B cell (primary cell): ENCODE measurements at regions of chr12 and their contacts with region 1.

Region 1: GRCh38 chr12:2244013-2244861 is 191.4 kb downstream of the CACNA1C start:
- DNase-seq: no peak
- ATAC-seq: no peak
- H3K4me3 ChIP-seq: no peak overlapping the region
- H3K4me3 Mint-ChIP-seq: no peak overlapping the region
- H3K27ac ChIP-seq: no peak overlapping the region
- H3K27ac Mint-ChIP-seq: no peak overlapping the region
- H3K4me1 ChIP-seq: peaks cover 13 to 20% of the 10 kb centered on the region in 2 donors
- H3K4me1 Mint-ChIP-seq: peaks cover 34% of the 10 kb centered on the region
- H3K27me3 ChIP-seq: no peaks in the 10 kb centered on the region
- H3K27me3 Mint-ChIP-seq: no peaks in the 10 kb centered on the region
- CTCF ChIP-seq: no peak

Region 2: DNA sequence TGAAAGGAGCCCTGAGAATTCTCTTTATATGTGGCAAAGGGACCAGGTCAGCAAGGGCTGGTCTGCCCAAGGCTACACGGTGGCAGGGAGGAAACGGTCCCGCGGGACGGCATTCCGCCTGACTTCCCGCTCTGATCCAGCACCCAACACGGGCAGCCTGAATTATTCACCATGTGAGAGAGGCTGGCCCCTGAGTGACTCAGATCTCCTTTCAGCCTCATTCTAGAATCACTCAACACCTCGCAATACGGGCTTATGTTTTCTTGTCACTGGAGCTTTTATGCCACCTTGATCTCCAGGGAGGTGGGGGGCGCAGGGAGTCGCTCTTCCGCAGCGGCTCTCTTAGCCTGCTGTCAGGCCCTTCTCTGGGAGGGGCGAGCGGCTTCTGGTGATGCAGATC is 415.4 kb before region 1 on chr12:
- CTCF ChIA-PET with region 1: no interaction called
- POLR2A ChIA-PET with region 1: no interaction called
- intact Hi-C with region 1: no loop called
- DNase-seq: no peak
- ATAC-seq: no peak
- H3K4me3 ChIP-seq: no peak overlapping the region
- H3K4me3 Mint-ChIP-seq: no peak overlapping the region
- H3K27ac ChIP-seq: no peak overlapping the region
- H3K27ac Mint-ChIP-seq: no peak overlapping the region
- H3K4me1 ChIP-seq: no peaks in the 10 kb centered on the region
- H3K4me1 Mint-ChIP-seq: peaks cover 3% of the 10 kb centered on the region
- H3K27me3 ChIP-seq: peaks cover 0 to 18% (median 3%) of the 10 kb centered on the region in 4 experiments
- H3K27me3 Mint-ChIP-seq: peaks cover 40% of the 10 kb centered on the region
- CTCF ChIP-seq: no peak

Region 3: DNA sequence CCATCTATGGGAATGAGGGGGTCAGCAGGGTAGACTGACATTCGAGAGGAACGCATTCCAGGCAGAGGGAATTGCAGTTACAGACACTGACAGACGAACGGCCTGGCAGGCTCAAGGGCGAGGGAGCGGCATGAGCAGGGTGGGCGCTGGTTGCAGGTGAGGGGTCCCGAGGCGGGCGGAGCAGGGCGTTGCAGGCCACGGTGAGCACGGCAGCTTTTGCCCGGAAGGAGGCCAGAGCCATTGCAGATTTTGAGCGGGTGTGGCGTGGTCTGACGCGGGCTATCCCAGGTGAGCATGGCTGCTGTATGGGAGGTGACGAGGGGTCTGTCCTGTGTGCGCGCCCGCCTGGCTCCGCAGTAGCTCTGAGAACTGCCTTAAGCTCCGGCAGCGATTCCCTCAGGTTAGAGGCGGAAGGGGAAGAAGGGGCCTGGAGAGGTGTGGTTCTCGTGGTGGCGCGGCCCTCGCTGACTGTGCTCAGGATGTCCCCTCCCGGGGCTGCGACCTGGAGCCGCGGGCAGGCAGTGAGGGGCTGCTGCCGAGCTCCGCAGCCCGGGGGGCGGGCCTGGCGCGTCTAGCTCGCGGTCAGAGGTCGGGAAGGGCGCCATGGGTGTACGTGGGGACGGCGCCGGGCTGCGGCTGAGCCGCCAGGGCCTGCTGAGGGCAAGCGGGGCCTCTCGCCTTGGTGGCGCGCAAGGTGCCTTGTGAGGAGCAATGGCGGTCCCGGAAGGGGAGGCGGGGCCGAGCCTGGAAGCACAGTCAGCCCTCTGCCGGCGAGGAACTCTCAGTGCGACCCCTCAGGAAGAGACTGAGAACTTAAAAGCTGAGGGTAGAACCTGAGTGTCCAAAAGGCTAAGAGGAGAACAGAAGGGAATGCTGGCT is 14.3 kb before region 1 on chr12:
- CTCF ChIA-PET with region 1: no interaction called
- POLR2A ChIA-PET with region 1: no interaction called
- intact Hi-C with region 1: no loop called
- DNase-seq: peak; percentile 8
- ATAC-seq: no peak
- H3K4me3 ChIP-seq: no peak overlapping the region
- H3K4me3 Mint-ChIP-seq: no peak overlapping the region
- H3K27ac ChIP-seq: no peak overlapping the region
- H3K27ac Mint-ChIP-seq: no peak overlapping the region
- H3K4me1 ChIP-seq: no peaks in the 10 kb centered on the region
- H3K4me1 Mint-ChIP-seq: no peaks in the 10 kb centered on the region
- H3K27me3 ChIP-seq: no peaks in the 10 kb centered on the region
- H3K27me3 Mint-ChIP-seq: peaks cover 22% of the 10 kb centered on the region
- CTCF ChIP-seq: no peak

Region 4: DNA sequence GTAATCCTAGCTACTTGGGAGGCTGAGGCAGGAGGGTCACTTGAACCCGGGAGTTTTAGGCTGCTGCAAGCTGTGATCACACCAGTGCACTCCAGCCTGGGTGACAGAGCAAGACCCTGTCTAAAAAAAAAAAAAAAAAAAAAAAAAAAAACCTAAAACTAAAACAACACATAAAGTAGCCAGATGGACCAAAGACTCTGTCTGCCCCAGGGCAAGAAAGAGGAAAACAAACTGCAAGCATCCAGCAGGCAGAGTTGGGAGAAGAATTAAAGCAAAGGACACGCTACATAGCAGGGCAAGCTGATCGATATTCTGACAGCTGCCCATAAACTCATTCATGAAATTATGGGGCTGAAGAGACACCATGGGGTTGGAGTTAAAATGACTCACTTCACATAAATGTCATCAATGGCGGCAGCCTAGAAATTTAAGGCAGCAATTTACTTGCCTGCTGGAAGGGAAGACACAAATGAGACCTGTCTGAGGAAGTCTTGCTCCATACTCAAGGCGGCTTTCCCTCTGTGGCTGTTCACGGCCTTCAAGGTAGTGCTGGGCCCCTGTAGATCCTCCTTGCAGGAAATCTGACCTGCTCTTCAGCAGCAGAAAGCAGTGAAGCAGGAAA is 291.5 kb after region 1 on chr12:
- CTCF ChIA-PET with region 1: no interaction called
- POLR2A ChIA-PET with region 1: interaction called, 12 read pairs
- intact Hi-C with region 1: no loop called
- DNase-seq: no peak
- ATAC-seq: no peak
- H3K4me3 ChIP-seq: no peak overlapping the region
- H3K4me3 Mint-ChIP-seq: no peak overlapping the region
- H3K27ac ChIP-seq: no peak overlapping the region
- H3K27ac Mint-ChIP-seq: peak overlapping the region; percentile 4
- H3K4me1 ChIP-seq: no peaks in the 10 kb centered on the region
- H3K4me1 Mint-ChIP-seq: no peaks in the 10 kb centered on the region
- H3K27me3 ChIP-seq: no peaks in the 10 kb centered on the region
- H3K27me3 Mint-ChIP-seq: peaks cover 9% of the 10 kb centered on the region
- CTCF ChIP-seq: no peak